Naive thymus-derived CD4-positive, alpha-beta T cell (primary cell): ENCODE measurements at regions of chr10 and their contacts with region 1.

Region 1: DNA sequence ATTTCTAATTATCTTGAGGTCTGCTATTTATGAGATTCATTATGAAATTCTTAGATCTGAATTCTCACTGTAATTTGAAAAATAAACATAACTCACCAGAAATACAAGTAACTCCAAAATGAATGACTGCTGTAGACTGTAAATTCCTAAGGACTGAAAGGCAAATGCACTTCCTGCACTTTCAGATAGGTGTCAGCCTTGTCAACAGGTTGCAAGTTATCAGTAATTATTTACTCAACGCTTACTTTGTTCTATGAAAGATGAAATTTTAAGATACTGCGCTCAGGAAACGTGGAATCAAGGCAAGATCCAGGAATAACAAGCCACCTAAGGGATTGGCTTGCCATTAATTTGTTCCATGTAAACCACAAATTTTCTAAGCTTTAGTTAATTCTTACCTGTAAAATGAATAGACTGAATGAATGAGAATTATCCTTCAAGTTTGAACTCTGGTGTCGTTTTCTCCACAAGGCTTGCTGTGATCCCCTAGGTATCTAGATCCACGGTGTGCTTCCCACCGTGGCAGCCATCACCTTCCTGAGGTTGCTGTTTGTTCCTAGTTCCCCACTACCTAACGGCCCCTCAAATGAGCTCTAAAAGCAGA is 12.6 kb downstream of the DHX32 start:
- DNase-seq: peak in 6 of 9 donors; percentile 13 to 31 (median 17)
- ATAC-seq: peak; percentile 52
- H3K4me3 ChIP-seq: no peak overlapping the region
- H3K4me3 Mint-ChIP-seq: no peak overlapping the region
- H3K27ac ChIP-seq: no peak overlapping the region
- H3K27ac Mint-ChIP-seq: no peak overlapping the region
- H3K4me1 ChIP-seq: no peaks in the 10 kb centered on the region
- H3K4me1 Mint-ChIP-seq: peaks cover 0 to 4% (median 0%) of the 10 kb centered on the region in 7 donors
- H3K27me3 ChIP-seq: no peaks in the 10 kb centered on the region
- H3K27me3 Mint-ChIP-seq: no peaks in the 10 kb centered on the region

Region 2: DNA sequence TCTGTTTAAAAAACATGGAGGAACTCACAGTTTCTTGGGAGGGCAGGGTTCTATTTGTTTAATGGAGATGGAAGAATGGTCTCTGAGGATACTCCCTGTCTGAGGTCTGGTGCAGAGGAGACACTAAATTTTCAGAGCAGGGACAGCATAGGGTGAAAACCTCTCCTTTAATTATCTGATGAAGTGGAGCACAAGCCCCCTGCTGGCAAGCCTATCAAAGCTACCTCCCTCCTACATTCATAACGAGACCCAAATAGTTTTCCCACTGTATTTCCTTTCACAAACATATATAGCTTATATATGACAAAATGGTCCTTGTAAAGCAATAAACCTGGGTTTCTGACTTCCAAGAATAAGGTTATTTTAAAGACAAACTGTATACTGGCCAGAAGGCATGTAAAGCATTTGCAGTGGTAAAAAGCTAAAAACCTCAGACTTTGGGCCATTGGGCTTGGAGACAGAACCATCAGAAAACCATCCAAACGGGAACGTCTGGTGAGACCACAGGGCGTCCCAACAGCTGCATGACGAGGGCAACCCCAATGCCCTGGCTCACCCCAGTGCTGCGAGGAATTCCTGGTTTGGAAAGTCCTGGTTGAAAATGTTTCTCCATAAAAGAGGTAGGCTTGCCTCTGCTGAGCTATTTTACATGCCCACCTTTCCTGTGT is 229.2 kb after region 1 on chr10:
- CTCF ChIA-PET with region 1: no interaction called
- POLR2A ChIA-PET with region 1: no interaction called
- intact Hi-C with region 1: loop called in 1 of 2 experiments (anchors 2 kb)
- DNase-seq: no peak
- ATAC-seq: no peak
- H3K4me3 ChIP-seq: no peak overlapping the region
- H3K4me3 Mint-ChIP-seq: no peak overlapping the region
- H3K27ac ChIP-seq: no peak overlapping the region
- H3K27ac Mint-ChIP-seq: no peak overlapping the region
- H3K4me1 ChIP-seq: no peaks in the 10 kb centered on the region
- H3K4me1 Mint-ChIP-seq: no peaks in the 10 kb centered on the region
- H3K27me3 ChIP-seq: no peaks in the 10 kb centered on the region
- H3K27me3 Mint-ChIP-seq: peaks cover 0 to 4% (median 0%) of the 10 kb centered on the region in 5 donors

Region 3: DNA sequence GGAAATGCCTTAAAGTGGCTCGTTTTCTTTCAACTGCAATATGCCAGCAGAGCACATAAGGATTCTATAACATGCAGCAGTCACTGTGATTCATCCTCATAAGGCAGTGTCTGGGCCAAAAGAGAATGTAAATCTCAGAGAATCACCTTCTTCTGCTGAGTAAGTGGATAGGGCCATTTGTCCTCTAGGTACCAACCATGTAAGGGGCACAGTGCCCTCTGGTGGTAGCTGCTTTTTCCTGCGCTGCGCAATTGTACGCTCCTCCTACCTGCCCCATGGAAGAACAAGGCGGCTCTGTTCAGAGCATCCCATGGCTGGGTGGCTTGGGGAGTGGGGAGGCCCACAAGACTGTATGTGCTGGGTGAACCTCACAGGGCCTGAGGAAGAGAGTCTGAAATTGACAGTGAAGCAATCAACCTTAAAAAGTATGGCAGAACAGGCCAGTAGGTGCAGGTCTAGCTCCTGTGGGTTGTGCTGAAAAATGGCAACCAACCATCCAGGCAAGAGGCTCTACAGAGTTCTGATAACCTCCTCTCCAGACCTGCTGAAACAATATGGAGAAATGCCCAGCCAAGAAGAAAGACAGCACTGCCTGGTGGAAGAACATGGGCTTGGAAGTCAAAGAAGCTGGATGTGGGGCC is 880.7 kb after region 1 on chr10:
- CTCF ChIA-PET with region 1: no interaction called
- POLR2A ChIA-PET with region 1: no interaction called
- intact Hi-C with region 1: loop called in 1 of 2 experiments (anchors 5 kb)
- DNase-seq: peak in 2 of 9 donors; percentile 10 to 36
- ATAC-seq: peak; percentile 46
- H3K4me3 ChIP-seq: no peak overlapping the region
- H3K4me3 Mint-ChIP-seq: no peak overlapping the region
- H3K27ac ChIP-seq: no peak overlapping the region
- H3K27ac Mint-ChIP-seq: no peak overlapping the region
- H3K4me1 ChIP-seq: no peaks in the 10 kb centered on the region
- H3K4me1 Mint-ChIP-seq: no peaks in the 10 kb centered on the region
- H3K27me3 ChIP-seq: no peaks in the 10 kb centered on the region
- H3K27me3 Mint-ChIP-seq: peaks cover 0 to 7% (median 0%) of the 10 kb centered on the region in 5 donors

Region 4: GRCh38 chr10:127577376-127577775 is 1708.9 kb after region 1 on chr10:
- CTCF ChIA-PET with region 1: no interaction called
- POLR2A ChIA-PET with region 1: no interaction called
- intact Hi-C with region 1: loop called in 1 of 2 experiments (anchors 5 kb)
- DNase-seq: no peak
- ATAC-seq: no peak
- H3K4me3 ChIP-seq: no peak overlapping the region
- H3K4me3 Mint-ChIP-seq: no peak overlapping the region
- H3K27ac ChIP-seq: no peak overlapping the region
- H3K27ac Mint-ChIP-seq: no peak overlapping the region
- H3K4me1 ChIP-seq: no peaks in the 10 kb centered on the region
- H3K4me1 Mint-ChIP-seq: no peaks in the 10 kb centered on the region
- H3K27me3 ChIP-seq: no peaks in the 10 kb centered on the region
- H3K27me3 Mint-ChIP-seq: peaks cover 0 to 28% (median 18%) of the 10 kb centered on the region in 5 donors